H1 (cell line): ENCODE measurements at regions of chr10 and their contacts with region 1.

Region 1: GRCh38 chr10:79463578-79464496 is 18.4 kb upstream of the ZCCHC24 start:
- DNase-seq: no peak
- H3K4me3 ChIP-seq: no peak overlapping the region
- H3K27ac ChIP-seq: no peak overlapping the region
- H3K4me1 ChIP-seq: no peaks in the 10 kb centered on the region
- H3K27me3 ChIP-seq: no peaks in the 10 kb centered on the region; a peak in 1 of 7 replicates
- CTCF ChIP-seq: no peak
- EP300 ChIP-seq: no peak
- POLR2A ChIP-seq: no peak
- RAD21 ChIP-seq: no peak

Region 2: GRCh38 chr10:79356104-79356503 is 107.7 kb before region 1 on chr10:
- CTCF ChIA-PET with region 1: no interaction called
- POLR2A ChIA-PET with region 1: no interaction called
- DNase-seq: peak in 1 of 2 experiments; percentile 27
- H3K4me3 ChIP-seq: no peak overlapping the region
- H3K27ac ChIP-seq: no peak overlapping the region
- H3K4me1 ChIP-seq: no peaks in the 10 kb centered on the region; a peak in 1 of 7 replicates
- H3K27me3 ChIP-seq: no peaks in the 10 kb centered on the region
- CTCF ChIP-seq: no peak
- EP300 ChIP-seq: no peak
- POLR2A ChIP-seq: no peak
- RAD21 ChIP-seq: no peak

Region 3: DNA sequence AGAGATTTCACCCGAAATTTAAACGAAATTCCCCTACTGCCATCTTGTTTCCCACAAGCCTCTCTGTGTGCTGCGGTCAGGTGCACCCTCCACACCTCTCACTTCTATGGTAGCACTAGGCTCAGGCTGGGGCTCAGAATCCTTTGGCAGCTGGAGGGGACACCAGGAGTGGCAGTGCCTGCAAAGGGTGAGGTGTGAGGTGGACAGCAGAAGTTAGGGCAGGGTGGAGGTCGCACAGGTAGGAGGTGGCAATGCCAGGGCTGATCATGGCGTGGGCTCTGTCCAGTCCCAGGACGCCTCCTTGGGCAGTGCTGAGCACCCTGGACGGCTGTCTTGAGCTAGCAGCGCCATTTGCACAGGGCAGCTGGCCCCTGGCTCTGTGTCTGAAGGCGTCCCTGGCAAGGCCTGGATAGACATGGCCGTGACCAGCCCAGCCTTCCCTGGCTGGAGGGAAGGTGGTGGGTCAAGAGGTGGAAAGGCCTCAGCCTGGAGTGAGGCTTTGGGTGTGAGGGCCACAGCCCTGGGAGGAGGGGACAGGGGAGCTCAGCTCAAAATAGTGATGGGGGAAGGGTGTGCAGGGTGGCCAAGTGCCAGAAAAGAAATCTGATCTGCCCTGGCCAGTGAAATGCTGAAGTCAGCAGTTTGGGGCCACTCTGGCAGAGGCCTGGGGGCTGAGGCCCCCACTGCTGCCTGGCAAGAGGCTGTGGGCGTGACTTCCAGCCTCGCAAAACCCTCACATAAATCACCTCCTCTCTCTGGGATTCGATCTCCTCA is 58.4 kb before region 1 on chr10:
- CTCF ChIA-PET with region 1: interaction called, 37 read pairs
- POLR2A ChIA-PET with region 1: no interaction called
- DNase-seq: no peak
- H3K4me3 ChIP-seq: no peak overlapping the region
- H3K27ac ChIP-seq: no peak overlapping the region
- H3K4me1 ChIP-seq: peaks cover 0 to 22% (median 11%) of the 10 kb centered on the region in 4 experiments; a peak in 6 of 7 replicates
- H3K27me3 ChIP-seq: no peaks in the 10 kb centered on the region; a peak in 1 of 7 replicates
- CTCF ChIP-seq: no peak
- EP300 ChIP-seq: no peak
- POLR2A ChIP-seq: no peak
- RAD21 ChIP-seq: no peak

Region 4: GRCh38 chr10:79424221-79425073 is 39.4 kb before region 1 on chr10:
- CTCF ChIA-PET with region 1: interaction called, 10 read pairs
- POLR2A ChIA-PET with region 1: no interaction called
- DNase-seq: no peak
- H3K4me3 ChIP-seq: no peak overlapping the region
- H3K27ac ChIP-seq: no peak overlapping the region
- H3K4me1 ChIP-seq: peaks cover 0 to 5% (median 3%) of the 10 kb centered on the region in 4 experiments; a peak in 4 of 7 replicates
- H3K27me3 ChIP-seq: no peaks in the 10 kb centered on the region
- CTCF ChIP-seq: no peak
- EP300 ChIP-seq: no peak
- POLR2A ChIP-seq: no peak
- RAD21 ChIP-seq: no peak

Region 5: GRCh38 chr10:79445141-79445976 is 18.5 kb before region 1 on chr10 and contains the start of gene ZCCHC24:
- CTCF ChIA-PET with region 1: interaction called, 14 read pairs
- POLR2A ChIA-PET with region 1: interaction called, 4 read pairs
- DNase-seq: peak; percentile 92 to 94
- H3K4me3 ChIP-seq: peak within 1 kb of the TSS; percentile 49 to 68 (median 60)
- H3K27ac ChIP-seq: no peak within 1 kb of the TSS
- H3K4me1 ChIP-seq: peaks cover 6 to 21% (median 10%) of the 10 kb centered on the region in 4 experiments; a peak in 5 of 7 replicates
- H3K27me3 ChIP-seq: peaks cover 0 to 44% (median 30%) of the 10 kb centered on the region in 4 experiments; a peak in 6 of 7 replicates
- CTCF ChIP-seq: no peak
- EP300 ChIP-seq: no peak
- POLR2A ChIP-seq: peak in 1 of 2 experiments; percentile 70; a peak in 2 of 3 replicates
- RAD21 ChIP-seq: no peak
- total RNA-seq, gene ZCCHC24: 6.2 and 6.9 TPM in 2 replicates

Region 6: GRCh38 chr10:79502561-79503309 is 38.9 kb after region 1 on chr10:
- CTCF ChIA-PET with region 1: interaction called, 12 read pairs
- POLR2A ChIA-PET with region 1: no interaction called
- DNase-seq: peak; percentile 29 to 78
- H3K4me3 ChIP-seq: no peak overlapping the region
- H3K27ac ChIP-seq: no peak overlapping the region
- H3K4me1 ChIP-seq: no peaks in the 10 kb centered on the region
- H3K27me3 ChIP-seq: no peaks in the 10 kb centered on the region; a peak in 3 of 7 replicates
- CTCF ChIP-seq: peak; percentile 66 to 75 (median 71)
- EP300 ChIP-seq: no peak
- POLR2A ChIP-seq: no peak
- RAD21 ChIP-seq: peak; percentile 72 to 74